Ovary (tissue), 10 donors: ENCODE measurements at regions of chr1 and their contacts with region 1.

Region 1: DNA sequence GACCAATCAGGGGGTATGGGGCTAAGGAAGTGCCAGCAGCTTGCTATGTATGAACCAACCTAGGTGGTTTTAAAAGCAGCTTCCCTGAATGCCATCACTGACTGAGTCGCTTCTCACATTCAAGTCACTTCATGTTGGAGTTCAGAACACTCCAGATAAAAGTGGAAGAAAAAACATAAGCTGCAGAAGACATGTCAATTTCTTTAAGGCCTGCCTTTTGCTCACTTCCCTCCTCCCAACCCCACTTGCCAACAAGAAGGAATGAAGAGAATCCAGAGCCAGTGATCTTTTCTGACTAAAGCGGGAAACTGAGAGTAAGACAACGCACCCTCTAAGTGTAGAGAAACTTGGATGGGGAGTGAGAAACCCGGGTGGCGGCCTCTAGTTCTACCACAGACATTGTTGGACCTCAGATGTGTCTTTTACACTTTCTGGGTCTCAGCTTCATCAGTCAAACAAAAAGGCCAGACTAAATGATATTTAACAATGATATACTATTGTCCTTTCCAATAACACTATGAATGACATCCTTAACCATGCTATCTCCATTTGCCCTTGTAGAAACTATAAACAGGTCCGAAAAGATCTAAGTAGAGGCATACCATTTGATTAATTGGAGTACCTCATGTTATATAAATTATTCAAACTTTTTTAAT is 54.1 kb downstream of the LUZP1 start:
- DNase-seq: no peak
- H3K4me3 ChIP-seq: no peak overlapping the region
- H3K27ac ChIP-seq: no peak overlapping the region
- H3K4me1 ChIP-seq: peaks cover 9% of the 10 kb centered on the region
- H3K27me3 ChIP-seq: no peaks in the 10 kb centered on the region
- CTCF ChIP-seq: no peak
- EP300 ChIP-seq: no peak
- POLR2A ChIP-seq: no peak

Region 2: DNA sequence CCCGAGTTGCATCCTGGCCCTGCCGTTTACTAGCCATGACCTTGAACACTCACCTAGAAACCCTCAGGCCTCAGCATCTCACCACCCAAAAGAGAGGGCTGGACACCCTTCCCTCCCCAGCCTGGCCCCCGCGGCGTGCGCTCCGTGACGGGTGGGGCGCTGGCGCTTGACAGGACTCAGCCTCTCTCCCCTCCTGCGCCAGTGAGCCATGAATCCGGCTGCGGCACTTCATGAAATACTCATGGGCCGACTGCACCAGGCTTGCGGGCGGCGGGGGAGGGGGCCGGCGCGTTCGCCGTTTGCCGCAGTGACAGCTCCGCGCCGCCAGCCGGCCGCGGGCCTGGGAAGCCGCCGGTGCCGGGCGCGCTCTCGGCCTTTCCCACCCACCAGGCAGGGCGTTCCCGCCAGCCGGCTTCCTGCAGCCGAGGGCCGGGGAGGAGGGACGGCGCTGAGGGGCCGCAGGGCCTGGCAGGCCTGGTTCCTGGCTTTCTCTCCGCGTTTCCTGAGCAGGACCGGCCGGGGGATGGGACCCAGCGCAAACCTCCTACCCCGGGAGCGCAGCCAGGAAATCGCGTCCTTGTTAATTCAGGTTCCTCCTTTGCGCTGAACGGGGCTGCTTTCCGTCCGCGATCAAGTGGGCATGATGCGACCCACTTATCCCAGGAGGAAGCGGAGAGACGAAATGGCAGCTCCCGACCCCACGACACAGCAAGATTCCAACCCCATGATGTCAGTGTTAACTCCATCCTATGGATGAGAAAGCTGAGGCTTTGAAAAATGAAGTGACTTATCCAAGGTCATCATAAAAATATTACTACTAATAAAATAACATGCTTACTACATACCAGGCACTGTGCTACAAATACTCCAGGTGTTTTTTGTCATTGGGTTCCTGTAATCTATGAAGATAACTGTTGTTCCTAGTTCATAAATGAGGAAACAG is 63.2 kb after region 1 on chr1:
- intact Hi-C with region 1: loop called in 1 of 4 experiments (anchors 5 kb)
- DNase-seq: peak; percentile 79 to 90 (median 85)
- H3K4me3 ChIP-seq: peak overlapping the region; percentile 58
- H3K27ac ChIP-seq: peak overlapping the region; percentile 46 to 79
- H3K4me1 ChIP-seq: peaks cover 4% of the 10 kb centered on the region
- H3K27me3 ChIP-seq: no peaks in the 10 kb centered on the region
- CTCF ChIP-seq: peak in 2 of 3 donors; percentile 35 to 62
- EP300 ChIP-seq: no peak
- POLR2A ChIP-seq: no peak

Region 3: DNA sequence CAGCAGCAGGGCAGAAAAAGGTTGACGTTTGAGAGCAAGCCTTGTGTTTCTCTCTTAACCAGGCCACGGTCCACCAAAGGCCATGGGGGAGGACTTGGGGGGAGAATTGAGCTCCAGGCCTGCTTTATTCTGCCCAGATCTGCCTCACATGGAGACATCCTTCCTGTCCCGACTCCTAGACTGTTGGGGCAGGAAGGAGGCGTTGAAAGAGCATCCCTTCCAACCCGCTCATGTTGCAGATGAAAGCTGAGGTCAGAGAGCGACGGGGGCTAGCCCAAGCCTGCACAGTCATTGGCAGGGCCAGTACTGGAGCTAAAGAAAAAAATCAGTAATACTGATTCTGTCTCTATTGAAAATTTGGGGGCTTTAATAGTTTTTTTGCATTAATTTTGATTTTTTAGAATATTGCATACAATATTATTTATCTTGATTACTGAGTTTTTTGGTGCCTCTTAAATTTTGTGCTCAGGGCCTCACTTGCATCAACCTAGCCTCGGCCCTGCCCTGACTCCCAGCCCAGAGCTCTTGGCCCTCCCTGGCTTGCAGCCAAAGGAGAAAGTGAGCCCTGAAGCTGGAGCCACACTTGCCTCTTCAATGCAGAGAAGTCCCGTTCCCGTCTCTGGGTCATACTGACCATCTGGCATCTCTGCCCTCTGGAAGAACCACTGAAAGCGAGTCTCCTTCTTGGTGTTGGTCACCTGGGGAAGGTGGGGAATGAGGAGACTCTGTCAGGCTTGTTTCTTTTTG is 950.9 kb after region 1 on chr1:
- intact Hi-C with region 1: no loop called
- DNase-seq: no peak
- H3K4me3 ChIP-seq: no peak overlapping the region
- H3K27ac ChIP-seq: no peak overlapping the region
- H3K4me1 ChIP-seq: no peaks in the 10 kb centered on the region
- H3K27me3 ChIP-seq: no peaks in the 10 kb centered on the region
- CTCF ChIP-seq: no peak
- EP300 ChIP-seq: no peak
- POLR2A ChIP-seq: no peak